AG04449 (cell line): ENCODE measurements at regions of chr2 and their contacts with region 1.

Region 1: GRCh38 chr2:67733517-67733916 is 329.3 kb downstream of the C1D start:
- DNase-seq: no peak
- H3K4me3 ChIP-seq: no peak overlapping the region
- CTCF ChIP-seq: peak; percentile 72

Region 2: DNA sequence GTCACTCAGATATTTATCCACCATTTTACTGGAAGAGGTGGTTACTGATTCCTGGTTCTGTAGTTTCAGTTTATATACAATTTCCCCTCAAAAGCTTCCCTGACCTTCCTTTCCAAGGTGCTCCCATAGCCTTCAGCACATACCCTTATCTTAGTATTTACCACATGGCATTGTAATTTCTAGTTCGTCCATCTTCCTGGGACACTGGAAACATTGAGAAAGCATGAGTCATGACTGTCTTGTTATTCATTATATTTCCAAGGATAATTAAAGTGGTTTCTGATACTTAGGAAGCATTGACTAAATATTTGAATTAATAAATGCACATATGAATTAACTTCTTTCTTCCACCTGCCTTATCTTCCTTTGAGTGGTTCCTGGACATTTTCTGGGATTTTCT is 132.6 kb before region 1 on chr2:
- CTCF ChIA-PET with region 1: no interaction called
- POLR2A ChIA-PET with region 1: no interaction called
- DNase-seq: no peak
- H3K4me3 ChIP-seq: no peak overlapping the region
- CTCF ChIP-seq: no peak

Region 3: GRCh38 chr2:67840460-67841068 is 107.0 kb after region 1 on chr2:
- CTCF ChIA-PET with region 1: interaction called, 45 read pairs
- POLR2A ChIA-PET with region 1: no interaction called
- DNase-seq: no peak
- H3K4me3 ChIP-seq: no peak overlapping the region
- CTCF ChIP-seq: peak; percentile 90

Region 4: DNA sequence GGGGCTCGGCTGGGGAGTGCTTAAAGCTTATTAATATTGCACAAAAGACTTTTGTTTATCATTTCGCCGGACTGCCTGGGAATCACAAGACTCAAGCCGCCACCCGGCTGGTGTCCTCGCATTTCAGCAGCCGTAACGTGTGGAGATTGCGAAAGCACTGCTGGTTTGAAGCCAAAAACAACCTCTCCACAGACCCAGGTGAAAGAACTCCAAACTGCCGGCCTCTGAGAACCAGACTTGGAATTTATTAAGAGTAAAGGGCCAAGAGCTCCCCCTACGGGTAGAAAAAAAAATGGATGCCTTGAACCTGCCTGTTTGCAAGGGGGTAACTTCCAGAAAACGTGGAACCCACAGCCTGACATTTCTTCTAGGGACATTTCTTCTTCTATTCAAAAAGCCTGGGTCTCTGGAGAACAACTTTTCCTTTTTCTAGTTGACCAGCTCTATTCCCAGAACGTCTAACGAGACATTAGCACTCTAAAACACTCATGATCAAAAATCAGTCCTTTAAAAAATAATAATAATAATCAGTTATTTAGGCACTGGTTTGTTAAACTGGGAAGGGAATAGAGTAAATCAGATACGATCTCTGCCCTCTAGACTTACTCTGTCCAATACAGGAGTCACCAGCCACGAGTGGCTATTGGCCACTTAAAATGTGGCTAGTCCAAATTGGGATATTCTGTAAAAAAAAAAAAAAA is 113.0 kb after region 1 on chr2:
- CTCF ChIA-PET with region 1: interaction called, 45 read pairs
- POLR2A ChIA-PET with region 1: no interaction called
- DNase-seq: peak; percentile 84
- H3K4me3 ChIP-seq: peak overlapping the region; percentile 30; the same call in 1 of the 2 replicates
- CTCF ChIP-seq: peak; percentile 58

Region 5: DNA sequence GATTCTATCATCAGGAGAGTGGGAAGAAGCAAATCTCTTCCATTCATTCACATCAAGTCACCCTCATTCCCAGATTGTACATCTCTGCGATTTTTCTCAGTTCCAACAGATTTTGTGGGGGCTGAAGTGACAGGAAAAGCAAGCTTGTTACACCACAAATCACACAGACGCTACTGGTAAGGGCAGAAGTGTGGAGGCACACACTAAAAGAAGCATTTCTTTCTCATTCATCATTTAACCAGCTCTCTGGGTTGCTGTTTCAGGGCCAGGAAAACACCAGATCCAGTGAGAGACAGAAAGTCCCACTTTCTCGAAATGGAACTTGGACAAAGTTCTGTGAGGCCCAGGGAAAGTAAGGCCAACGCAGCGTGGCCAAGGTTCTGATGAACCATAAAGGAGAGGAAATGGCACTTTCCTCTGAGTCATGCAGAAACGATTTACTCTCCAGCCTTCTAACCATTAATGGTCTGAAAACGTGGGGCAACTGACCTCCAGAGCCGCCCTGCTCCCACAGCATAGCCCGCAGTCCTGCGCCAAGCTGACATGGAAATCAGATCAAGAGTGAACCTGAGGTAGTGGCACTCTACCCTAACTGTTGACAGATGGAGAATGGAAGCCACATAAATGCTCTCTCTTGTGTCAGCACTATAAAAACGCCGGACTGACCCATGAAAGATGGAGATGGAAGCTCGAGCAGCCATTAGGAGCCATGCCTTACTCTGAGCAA is 138.3 kb after region 1 on chr2:
- CTCF ChIA-PET with region 1: no interaction called
- POLR2A ChIA-PET with region 1: no interaction called
- DNase-seq: peak; percentile 55
- H3K4me3 ChIP-seq: no peak overlapping the region
- CTCF ChIP-seq: no peak